ENCODE measurements at regions of chr12 and their contacts with region 1.

Region 1: DNA sequence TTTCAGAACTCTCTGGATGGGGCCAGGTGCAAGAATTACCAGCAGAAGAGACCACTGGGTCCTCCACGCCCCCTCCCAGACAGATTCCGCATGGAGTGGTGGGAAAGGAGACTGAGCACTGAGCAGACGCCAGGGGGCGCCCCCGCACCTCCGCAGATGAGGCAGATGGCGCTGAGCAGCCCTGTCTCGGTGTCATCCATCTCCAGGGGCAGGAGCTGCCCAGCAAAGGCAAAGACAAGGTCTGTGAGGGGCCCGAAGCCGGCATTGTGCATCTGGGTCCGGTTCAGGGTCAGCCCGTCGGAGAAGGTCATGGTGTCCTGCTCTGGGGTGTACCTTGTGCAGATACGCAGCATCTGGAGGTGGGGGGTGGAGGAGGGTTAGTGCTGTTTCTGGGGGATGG is 6.3 kb upstream of the ITGB7 start:
- DNase-seq: peak; percentile 81 to 97 (median 91)

Region 2: DNA sequence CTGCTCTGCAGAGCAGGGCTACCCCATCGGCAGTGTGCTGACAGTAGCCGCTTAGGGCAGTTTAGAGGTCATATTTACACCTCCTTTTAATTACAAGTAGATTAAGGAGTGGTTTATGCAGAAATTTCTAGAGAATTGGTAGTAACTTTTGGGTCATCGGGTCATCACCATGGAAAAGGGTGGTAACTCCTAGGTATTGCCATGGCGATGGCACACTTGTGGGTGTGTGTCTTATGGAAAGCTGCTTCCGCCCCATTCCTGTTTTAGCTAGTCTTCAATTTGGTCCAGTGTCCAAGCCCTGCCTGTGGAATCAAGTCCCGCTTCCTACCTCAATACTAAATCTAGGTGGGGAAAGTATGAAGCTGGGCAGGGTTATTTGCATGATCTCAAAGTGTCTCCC is 62.3 kb before region 1 on chr12:
- intact Hi-C with region 1: no loop called
- DNase-seq: no peak

Region 3: DNA sequence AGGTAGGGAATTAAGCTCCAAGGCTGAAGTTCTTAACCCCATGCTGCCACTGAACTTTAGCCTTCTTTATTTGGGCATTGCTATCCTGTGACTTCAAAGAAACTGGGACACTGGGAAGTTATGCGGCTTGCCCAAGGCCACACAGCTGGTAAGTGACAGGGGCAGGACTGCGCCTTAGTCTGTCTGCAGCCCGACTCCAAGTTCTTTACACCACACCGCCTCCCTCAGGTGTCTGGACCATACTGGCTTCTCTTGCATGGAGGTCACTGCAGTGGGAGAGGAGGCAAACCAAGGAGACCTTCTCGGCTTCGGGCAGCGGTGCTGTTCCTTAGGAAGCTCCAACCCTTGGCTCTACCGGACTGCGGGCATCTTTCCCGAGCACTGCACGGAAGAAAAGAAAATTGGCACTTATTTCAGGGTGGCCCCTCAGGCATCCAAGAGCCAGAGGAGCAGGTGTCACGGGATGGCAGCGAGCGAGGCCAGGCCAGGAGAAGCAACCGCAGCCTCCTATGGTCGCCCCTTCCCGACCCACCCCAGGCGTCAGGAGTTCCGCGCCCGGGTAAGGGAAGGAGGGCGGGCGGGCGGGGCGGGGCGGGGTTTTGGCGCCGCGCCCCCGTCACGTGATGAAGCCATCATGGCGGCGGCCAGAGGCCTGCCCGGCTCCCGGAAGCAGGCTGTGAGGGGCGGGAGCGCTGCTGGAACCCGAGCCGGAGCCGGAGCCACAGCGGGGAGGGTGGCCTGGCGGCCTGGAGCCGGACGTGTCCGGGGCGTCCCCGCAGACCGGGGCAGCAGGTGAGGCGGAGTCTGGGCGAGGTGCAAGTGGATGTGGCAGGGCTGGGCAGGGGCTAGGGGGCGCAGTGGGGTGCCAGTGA is 38.4 kb after region 1 on chr12:
- intact Hi-C with region 1: loop called (anchors 5 kb)
- DNase-seq: peak; percentile 56 to 91 (median 80)

Region 4: DNA sequence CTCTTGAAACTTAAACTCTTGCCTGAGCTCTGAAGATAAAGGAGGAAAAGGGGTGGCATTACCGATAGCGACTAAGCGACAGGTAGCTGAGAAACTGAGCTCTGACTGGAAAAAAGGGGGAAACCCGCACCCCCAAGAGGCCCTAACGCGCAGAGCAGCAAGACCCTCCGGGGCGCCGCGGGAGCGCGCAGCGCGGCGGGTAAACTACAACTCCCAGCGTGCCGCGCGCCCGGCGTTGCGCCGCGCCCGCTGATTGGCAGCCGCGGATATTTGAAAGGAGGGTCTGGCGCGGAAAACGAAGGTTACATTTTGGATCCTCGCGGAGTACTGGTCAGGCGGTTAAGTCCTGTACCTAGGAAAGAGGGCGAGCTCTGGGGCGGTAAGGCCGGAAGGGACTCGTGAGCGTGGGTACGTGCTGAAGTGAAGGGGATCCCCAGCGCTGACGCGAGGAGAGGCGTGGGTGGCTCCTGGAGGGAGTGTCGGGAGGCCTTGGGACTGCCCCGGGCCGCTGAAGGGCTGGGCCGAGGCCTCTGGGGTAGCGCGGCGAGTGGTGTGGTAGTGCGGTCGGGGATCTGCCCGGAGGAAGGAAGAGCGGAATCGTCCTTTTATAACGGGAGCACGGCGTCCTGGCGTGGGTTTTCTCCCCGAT is 54.8 kb after region 1 on chr12 and contains the start of gene ESPL1:
- intact Hi-C with region 1: loop called (anchors 5 kb)
- DNase-seq: peak; percentile 44 to 88 (median 72)

Region 5: GRCh38 chr12:53287741-53288216 is 74.4 kb after region 1 on chr12:
- intact Hi-C with region 1: loop called (anchors 2 kb)
- DNase-seq: peak; percentile 36 to 87 (median 73)

Region 6: GRCh38 chr12:53321074-53321814 is 107.9 kb after region 1 on chr12 and contains the start of gene AAAS:
- intact Hi-C with region 1: loop called (anchors 10 kb)
- DNase-seq: peak; percentile 90 to 98 (median 96)

Region 7: DNA sequence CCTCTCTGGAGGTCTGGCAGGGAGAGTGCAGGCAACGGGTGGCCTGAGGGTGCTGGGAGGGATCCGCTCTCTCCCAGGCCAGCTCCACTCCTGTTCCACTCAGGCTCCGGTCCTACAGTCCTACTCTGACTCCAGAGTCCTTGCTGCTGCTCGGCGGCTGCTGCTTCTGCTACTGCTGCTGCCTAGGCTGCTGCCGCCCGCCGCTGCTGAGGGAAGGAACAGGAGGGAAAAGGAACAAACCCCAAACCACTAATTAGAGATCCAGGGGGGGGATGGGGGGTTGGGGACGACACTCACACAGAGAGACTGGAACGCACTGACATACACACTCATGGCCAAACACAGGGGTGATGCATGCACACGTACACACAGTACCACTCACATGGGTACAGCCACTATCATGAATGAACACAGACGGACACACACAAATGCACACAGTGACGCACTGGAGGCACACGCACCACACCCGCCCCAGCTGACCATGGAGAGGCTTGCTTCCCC is 122.9 kb after region 1 on chr12 and contains the start of gene SP7:
- intact Hi-C with region 1: no loop called
- DNase-seq: peak in 1 of 42 donors; percentile 34

Measured in head of caudate nucleus (tissue), 42 donors.